ENCODE measurements at regions of chr18 and their contacts with region 1.

Region 1: GRCh38 chr18:78965917-78966792 is 13.5 kb upstream of the SALL3 start:
- DNase-seq: no peak
- H3K4me3 ChIP-seq: no peak overlapping the region
- H3K27ac ChIP-seq: no peak overlapping the region
- H3K4me1 ChIP-seq: no peaks in the 10 kb centered on the region
- H3K27me3 ChIP-seq: peaks cover 8% of the 10 kb centered on the region
- CTCF ChIP-seq: no peak
- EP300 ChIP-seq: no peak
- POLR2A ChIP-seq: no peak

Region 2: GRCh38 chr18:78873926-78874500 is 92.1 kb before region 1 on chr18:
- in situ Hi-C with region 1: no loop called
- intact Hi-C with region 1: no loop called
- DNase-seq: no peak
- H3K4me3 ChIP-seq: no peak overlapping the region
- H3K27ac ChIP-seq: no peak overlapping the region
- H3K4me1 ChIP-seq: no peaks in the 10 kb centered on the region
- H3K27me3 ChIP-seq: no peaks in the 10 kb centered on the region
- CTCF ChIP-seq: no peak
- EP300 ChIP-seq: no peak
- POLR2A ChIP-seq: no peak

Region 3: DNA sequence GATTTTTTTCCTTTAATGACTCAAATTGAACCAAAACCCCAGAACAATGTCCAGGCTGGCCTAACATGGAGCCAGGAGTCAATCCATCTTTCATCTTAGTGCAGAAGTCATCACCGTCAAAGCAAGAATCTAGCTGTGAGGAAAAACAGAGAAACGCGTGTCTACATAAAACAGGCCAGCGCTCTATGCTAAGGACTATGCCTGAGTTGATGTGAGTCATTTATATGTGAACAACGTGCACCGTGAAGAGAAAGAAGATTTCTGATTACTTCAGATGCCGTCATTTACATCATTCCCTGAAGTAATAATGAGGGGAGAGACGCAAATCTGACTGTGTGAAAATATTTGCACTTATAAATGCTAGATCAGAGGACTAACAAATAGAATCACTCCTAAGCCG is 20.5 kb before region 1 on chr18:
- in situ Hi-C with region 1: no loop called
- intact Hi-C with region 1: loop called (anchors 1 kb)
- DNase-seq: no peak
- H3K4me3 ChIP-seq: no peak overlapping the region
- H3K27ac ChIP-seq: no peak overlapping the region
- H3K4me1 ChIP-seq: no peaks in the 10 kb centered on the region
- H3K27me3 ChIP-seq: no peaks in the 10 kb centered on the region
- CTCF ChIP-seq: no peak
- EP300 ChIP-seq: no peak
- POLR2A ChIP-seq: no peak